ENCODE measurements at regions of chr19 and their contacts with region 1.

Region 1: GRCh38 chr19:33052352-33052972 is 12.2 kb downstream of the RHPN2 start:
- DNase-seq: no peak
- ATAC-seq: peak; percentile 14
- H3K4me3 ChIP-seq: no peak overlapping the region
- H3K27ac ChIP-seq: peak overlapping the region; percentile 61
- H3K4me1 ChIP-seq: peaks cover 90% of the 10 kb centered on the region
- H3K27me3 ChIP-seq: no peaks in the 10 kb centered on the region
- CTCF ChIP-seq: no peak

Region 2: DNA sequence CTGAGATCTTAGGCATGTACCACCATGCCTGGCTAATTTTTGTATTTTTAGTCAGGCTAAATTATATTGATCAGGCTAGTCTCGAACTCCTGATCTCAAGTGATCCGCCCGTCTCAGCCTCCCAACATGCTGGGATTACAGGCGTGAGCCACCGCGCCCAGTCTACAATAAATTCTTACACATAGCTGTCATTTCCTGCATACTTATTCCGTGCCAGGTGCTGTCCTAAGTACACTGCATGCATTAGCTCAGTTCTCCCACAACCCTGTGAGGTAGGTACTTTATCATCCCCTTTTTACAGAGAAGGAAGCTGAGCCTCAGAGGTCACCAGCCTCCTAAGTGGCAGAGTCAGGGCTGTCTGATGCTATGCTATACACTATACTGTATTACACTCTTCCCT is 19.4 kb after region 1 on chr19:
- CTCF ChIA-PET with region 1: no interaction called
- POLR2A ChIA-PET with region 1: no interaction called
- in situ Hi-C with region 1: no loop called
- intact Hi-C with region 1: no loop called
- DNase-seq: no peak
- ATAC-seq: peak; percentile 29; the same call in 1 of the 2 replicates
- H3K4me3 ChIP-seq: no peak overlapping the region
- H3K27ac ChIP-seq: peak overlapping the region; percentile 96
- H3K4me1 ChIP-seq: peaks cover 53% of the 10 kb centered on the region
- H3K27me3 ChIP-seq: no peaks in the 10 kb centered on the region
- CTCF ChIP-seq: no peak

Region 3: DNA sequence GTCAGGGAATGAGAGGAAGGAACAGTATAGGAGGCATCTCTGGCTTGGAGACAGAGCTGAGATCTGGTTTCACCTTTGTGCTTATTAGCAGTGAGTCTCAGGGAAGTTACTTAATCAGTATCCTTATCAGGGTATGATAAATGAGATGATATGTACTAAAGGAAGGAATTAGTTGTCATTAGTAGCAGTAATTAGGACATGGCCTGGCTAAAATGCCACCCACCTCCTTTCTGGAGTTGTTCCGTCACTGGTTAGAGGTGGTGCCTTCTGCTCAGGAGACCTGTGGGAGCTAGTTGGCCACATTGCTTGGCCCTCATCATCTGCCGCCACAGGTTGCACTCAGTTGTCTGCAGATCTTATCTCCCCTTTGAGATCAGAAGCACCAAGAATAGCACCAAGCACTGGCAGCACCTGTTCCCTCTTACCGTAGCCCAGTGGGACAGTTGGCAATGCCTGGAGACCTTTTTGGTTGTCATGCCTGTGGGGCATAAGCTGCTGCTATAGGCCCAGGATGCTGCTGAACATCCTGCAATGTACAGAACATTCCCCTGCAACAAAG is 33.2 kb after region 1 on chr19:
- CTCF ChIA-PET with region 1: no interaction called
- POLR2A ChIA-PET with region 1: no interaction called
- in situ Hi-C with region 1: no loop called
- intact Hi-C with region 1: no loop called
- DNase-seq: no peak
- ATAC-seq: no peak
- H3K4me3 ChIP-seq: no peak overlapping the region
- H3K27ac ChIP-seq: peak overlapping the region; percentile 48; the same call in 1 of the 2 replicates
- H3K4me1 ChIP-seq: peaks cover 14% of the 10 kb centered on the region
- H3K27me3 ChIP-seq: no peaks in the 10 kb centered on the region
- CTCF ChIP-seq: no peak

Region 4: GRCh38 chr19:33110137-33110910 is 57.9 kb after region 1 on chr19:
- CTCF ChIA-PET with region 1: no interaction called
- POLR2A ChIA-PET with region 1: interaction called, 6 read pairs
- in situ Hi-C with region 1: no loop called
- intact Hi-C with region 1: loop called (anchors 10 kb)
- DNase-seq: peak; percentile 78
- ATAC-seq: peak; percentile 93
- H3K4me3 ChIP-seq: no peak overlapping the region
- H3K27ac ChIP-seq: peak overlapping the region; percentile 87
- H3K4me1 ChIP-seq: peaks cover 18% of the 10 kb centered on the region
- H3K27me3 ChIP-seq: no peaks in the 10 kb centered on the region
- CTCF ChIP-seq: no peak

Measured in Panc1 (cell line).